Activated naive CD4-positive, alpha-beta T cell treated with anti-CD3 and anti-CD28 coated beads for 36 hours (primary cell): ENCODE measurements at regions of chr17 and their contacts with region 1.

Region 1: DNA sequence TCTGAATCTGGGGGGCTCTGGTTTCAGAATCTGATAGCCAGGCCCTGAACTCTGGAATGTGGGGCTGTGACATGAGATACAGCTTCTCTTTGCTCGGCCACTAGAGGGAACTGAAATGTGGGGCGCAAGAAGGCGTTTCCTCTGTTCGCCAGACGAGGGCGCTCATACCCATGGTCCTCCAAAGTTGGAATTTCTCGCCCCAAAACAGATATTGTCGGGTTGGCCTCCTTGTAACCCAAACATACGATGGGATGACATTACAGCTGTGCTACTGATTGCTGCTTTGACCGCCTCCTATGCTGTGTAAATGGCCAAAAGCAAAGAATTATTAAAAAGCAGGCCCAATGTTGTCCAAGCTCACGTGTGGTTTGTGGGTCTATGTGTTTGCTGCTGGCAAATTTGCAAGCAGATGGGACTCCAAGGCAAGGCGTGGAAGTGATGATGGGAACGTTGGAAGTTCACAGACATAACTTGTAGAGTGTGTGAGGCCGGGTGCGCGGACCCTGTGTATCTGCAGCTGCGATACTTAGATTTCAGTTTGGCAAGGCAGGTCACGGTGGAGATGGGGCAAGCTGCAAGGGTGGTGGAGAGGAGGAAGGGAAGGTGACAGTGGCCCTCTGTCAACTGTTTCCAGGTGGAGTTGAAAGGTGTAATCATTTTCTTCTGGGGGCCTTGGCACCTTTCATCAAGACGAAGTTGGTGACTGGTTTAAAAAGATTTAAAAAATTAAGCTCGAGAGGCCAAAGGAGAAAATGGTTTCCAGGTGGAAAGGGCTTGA is 13.0 kb upstream of the MSI2 start:
- DNase-seq: peak; percentile 88
- H3K4me3 Mint-ChIP-seq: no peak overlapping the region
- H3K27ac Mint-ChIP-seq: no peak overlapping the region
- H3K4me1 Mint-ChIP-seq: no peaks in the 10 kb centered on the region
- H3K27me3 Mint-ChIP-seq: no peaks in the 10 kb centered on the region

Region 2: GRCh38 chr17:57097832-57098421 is 145.4 kb before region 1 on chr17:
- CTCF ChIA-PET with region 1: no interaction called
- intact Hi-C with region 1: no loop called
- DNase-seq: no peak
- H3K4me3 Mint-ChIP-seq: no peak overlapping the region
- H3K27ac Mint-ChIP-seq: no peak overlapping the region
- H3K4me1 Mint-ChIP-seq: peaks cover 42% of the 10 kb centered on the region
- H3K27me3 Mint-ChIP-seq: no peaks in the 10 kb centered on the region

Region 3: DNA sequence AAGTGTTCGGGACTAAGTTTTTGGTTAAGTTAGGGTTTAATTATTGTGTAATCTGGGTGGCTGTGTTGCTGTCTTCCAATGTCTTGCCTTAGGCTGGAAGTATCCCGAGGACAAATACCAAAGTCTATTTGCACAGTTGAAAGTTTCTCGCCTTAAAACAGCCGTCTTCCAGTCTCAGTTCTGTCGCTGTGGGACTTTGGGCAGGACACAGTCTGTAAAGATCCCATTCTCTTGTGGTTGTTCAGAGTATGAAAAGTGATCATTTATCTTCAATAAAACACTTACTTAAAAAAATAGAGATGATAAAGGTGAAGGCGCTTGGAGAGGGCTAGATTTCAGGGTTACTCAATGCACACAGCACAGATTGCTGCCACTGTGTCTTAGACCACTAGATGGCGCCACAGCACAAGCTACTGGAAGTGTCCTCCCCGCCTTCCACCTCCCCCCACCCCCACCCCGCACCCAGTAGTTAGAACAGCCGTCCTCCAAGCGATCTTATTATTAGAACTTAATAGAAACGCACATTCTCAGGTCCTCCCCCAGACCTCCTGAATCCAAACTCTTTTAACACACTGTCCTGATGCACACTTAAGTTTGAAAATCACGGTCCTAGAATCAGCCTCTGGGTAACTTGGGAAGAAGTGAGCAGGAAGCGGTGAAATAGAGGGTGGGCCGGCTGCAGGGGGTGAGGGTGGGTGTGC is 112.4 kb before region 1 on chr17:
- CTCF ChIA-PET with region 1: interaction called, 7 read pairs
- intact Hi-C with region 1: loop called (anchors 5 kb)
- DNase-seq: peak; percentile 91
- H3K4me3 Mint-ChIP-seq: no peak overlapping the region
- H3K27ac Mint-ChIP-seq: no peak overlapping the region
- H3K4me1 Mint-ChIP-seq: peaks cover 8% of the 10 kb centered on the region
- H3K27me3 Mint-ChIP-seq: no peaks in the 10 kb centered on the region

Region 4: GRCh38 chr17:57271821-57272220 is 28.5 kb after region 1 on chr17:
- CTCF ChIA-PET with region 1: interaction called, 12 read pairs
- intact Hi-C with region 1: no loop called
- DNase-seq: no peak
- H3K4me3 Mint-ChIP-seq: no peak overlapping the region
- H3K27ac Mint-ChIP-seq: no peak overlapping the region
- H3K4me1 Mint-ChIP-seq: peaks cover 33% of the 10 kb centered on the region
- H3K27me3 Mint-ChIP-seq: no peaks in the 10 kb centered on the region

Region 5: DNA sequence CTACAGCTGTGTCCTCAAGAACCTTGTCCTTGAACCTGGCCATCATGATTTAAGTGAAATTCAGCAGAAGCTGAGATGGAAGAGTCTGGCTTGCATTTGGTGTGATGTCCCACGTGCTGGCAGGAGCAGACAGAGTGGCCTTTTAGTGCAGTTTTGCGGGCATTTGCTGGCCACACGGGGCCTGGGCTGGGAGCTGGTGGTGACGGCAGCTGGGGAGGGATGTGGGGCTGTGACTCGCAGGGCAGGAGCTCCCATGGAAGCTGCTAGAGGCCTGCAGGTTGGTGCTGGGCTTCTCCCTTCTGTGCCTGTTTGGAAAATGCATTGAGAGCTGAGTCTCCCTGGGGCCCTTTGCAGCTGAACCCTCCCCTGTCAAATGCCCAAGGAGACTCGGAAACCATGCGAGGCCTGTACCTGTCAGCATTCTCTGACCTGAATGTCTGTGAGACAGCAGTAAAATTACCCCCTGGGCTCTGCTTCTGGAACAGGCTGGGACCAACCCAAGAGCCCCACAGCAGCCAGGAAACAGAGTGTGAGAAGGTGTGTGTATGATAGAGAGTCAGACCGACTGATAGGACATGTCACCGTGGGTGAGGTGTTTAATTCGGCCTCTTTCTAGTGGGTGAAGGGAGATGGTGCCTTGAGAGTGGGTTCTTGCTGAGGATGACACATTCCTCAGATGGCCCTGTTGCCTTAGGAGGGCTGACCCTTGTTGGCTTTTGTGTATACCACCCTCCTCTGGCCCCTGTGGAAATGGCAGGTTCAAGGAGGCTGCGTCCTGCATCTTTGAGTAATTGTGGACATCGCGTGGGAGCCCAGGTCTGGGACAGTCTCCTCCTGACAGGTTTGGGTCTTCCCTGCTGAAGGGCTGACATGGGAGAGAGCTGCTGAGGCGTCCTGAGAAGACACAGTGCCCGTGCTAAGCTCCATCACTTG is 158.5 kb after region 1 on chr17:
- CTCF ChIA-PET with region 1: interaction called, 15 read pairs
- intact Hi-C with region 1: loop called (anchors 2 kb)
- DNase-seq: no peak
- H3K4me3 Mint-ChIP-seq: no peak overlapping the region
- H3K27ac Mint-ChIP-seq: no peak overlapping the region
- H3K4me1 Mint-ChIP-seq: peaks cover 13% of the 10 kb centered on the region
- H3K27me3 Mint-ChIP-seq: no peaks in the 10 kb centered on the region

Region 6: DNA sequence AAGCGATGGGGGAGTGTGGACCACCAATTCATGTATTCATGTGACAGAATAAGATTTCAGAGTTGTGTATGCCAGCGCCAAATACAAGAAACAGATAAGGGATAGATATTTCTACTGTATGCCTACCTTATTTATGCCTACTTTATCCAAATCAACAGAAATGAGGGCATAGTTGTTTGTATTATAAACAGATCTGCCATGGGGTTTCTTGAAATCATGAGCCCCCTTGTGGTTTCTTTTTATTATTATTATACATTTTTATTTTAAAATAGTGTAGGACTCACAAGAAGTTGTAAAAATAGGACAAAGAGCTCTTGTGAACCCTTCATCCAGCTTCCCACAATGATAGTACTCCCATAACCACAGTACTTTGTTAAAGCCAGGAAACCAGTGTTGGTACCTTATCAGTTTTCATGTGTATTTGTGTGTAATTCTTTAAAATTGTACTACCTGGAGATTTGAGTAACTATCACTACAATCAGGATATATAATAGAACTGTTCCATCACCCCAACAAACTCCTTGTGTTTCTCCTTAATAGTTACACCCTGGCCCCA is 272.4 kb after region 1 on chr17:
- CTCF ChIA-PET with region 1: interaction called, 9 read pairs
- intact Hi-C with region 1: loop called (anchors 1 kb)
- DNase-seq: no peak
- H3K4me3 Mint-ChIP-seq: no peak overlapping the region
- H3K27ac Mint-ChIP-seq: no peak overlapping the region
- H3K4me1 Mint-ChIP-seq: peaks cover 11% of the 10 kb centered on the region
- H3K27me3 Mint-ChIP-seq: no peaks in the 10 kb centered on the region

Region 7: GRCh38 chr17:57671667-57672632 is 428.6 kb after region 1 on chr17:
- CTCF ChIA-PET with region 1: interaction called, 38 read pairs
- intact Hi-C with region 1: loop called (anchors 1 kb)
- DNase-seq: peak; percentile 83
- H3K4me3 Mint-ChIP-seq: no peak overlapping the region
- H3K27ac Mint-ChIP-seq: peak overlapping the region; percentile 83
- H3K4me1 Mint-ChIP-seq: peaks cover 34% of the 10 kb centered on the region
- H3K27me3 Mint-ChIP-seq: no peaks in the 10 kb centered on the region

Region 8: DNA sequence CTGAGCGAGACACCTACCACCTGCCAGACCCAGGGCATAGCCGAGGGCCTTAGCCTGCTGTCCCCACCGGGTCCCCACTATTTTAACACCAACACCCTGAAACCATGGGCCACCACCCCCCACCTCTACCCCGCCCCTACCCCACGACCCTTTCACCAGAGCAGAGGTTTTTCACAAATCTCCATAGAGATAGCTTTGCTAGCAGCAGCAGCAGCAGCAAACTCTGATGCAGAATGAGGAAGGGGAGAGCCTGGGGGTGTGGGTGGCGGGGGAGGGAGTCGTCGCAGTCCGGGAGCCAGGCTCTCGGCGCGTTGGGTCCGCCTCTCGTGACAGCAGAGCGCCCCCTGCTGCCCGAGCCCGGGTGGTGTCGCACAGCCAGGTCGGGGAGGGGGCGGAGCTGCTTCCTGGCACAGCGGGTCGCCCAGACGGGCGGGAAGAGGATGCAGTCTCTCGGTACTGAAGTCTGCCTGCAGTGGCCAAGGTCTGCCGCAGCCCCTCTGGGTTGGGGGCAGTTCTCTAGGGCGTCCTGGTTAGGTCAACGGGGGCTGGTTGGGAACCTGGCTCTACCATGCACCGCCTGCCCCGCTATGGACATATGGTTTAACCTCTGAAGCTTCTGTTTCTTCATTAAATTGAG is 539.9 kb after region 1 on chr17:
- CTCF ChIA-PET with region 1: interaction called, 28 read pairs
- intact Hi-C with region 1: no loop called
- DNase-seq: peak; percentile 88
- H3K4me3 Mint-ChIP-seq: no peak overlapping the region
- H3K27ac Mint-ChIP-seq: no peak overlapping the region
- H3K4me1 Mint-ChIP-seq: no peaks in the 10 kb centered on the region
- H3K27me3 Mint-ChIP-seq: peaks cover 11% of the 10 kb centered on the region